Endothelial cell of umbilical vein (primary cell): ENCODE measurements at regions of chr1 and their contacts with region 1.

Region 1: DNA sequence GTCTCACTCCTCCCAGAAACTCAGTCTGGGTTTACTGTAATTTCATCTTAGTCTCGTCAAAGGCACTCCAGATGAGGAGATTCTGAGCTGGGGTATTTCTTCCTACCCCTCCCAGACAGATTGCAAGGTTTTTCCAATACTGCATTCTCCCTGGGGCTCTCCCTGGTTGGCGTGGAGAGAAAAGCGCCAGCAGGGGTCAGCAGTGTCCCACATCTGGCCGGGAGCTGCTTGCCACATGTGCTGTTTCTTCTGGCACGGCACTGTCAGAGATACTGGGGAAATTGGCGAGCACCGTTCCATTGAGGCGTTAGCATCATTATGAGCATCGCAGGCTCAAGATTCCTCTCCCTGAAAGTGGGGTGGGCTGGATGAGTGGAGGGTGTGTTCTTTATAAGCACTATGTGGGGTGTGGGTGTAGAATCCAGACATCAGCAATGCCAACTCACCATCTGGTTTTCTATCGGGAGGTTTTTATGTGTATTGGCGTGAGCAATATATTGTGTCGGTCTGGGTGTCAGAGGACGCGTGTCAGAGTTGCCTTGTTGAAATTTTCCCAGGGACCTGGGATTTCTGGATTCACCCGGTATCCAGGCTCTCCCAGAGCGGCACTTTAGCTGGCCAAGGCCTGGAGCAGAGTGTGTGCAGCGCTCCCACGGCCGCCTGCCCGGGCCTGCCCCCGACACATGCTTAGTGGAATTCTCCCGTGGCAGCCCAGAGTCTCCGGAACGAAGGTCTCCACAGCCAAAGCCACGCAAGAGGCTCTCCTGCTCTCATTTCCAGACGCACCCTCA is 8.0 kb upstream of the NAV1 start:
- DNase-seq: peak; percentile 77
- H3K4me3 ChIP-seq: no peak overlapping the region
- H3K27ac ChIP-seq: no peak overlapping the region
- H3K4me1 ChIP-seq: peaks cover 12% of the 10 kb centered on the region
- H3K27me3 ChIP-seq: no peaks in the 10 kb centered on the region
- CTCF ChIP-seq: peak; percentile 87 to 89
- POLR2A ChIP-seq: no peak

Region 2: GRCh38 chr1:201023517-201023902 is 507.4 kb before region 1 on chr1 and contains the start of gene KIF21B:
- CTCF ChIA-PET with region 1: no interaction called
- POLR2A ChIA-PET with region 1: no interaction called
- dilution Hi-C with region 1: no loop called
- intact Hi-C with region 1: no loop called
- DNase-seq: peak; percentile 75
- H3K4me3 ChIP-seq: peak within 1 kb of the TSS; percentile 11 to 49 (median 13)
- H3K27ac ChIP-seq: no peak within 1 kb of the TSS
- H3K4me1 ChIP-seq: peaks cover 37% of the 10 kb centered on the region
- H3K27me3 ChIP-seq: no peaks in the 10 kb centered on the region
- CTCF ChIP-seq: no peak
- POLR2A ChIP-seq: no peak
- total RNA-seq, gene KIF21B: 4.4 and 4.7 TPM in 2 replicates

Region 3: GRCh38 chr1:201481761-201482493 is 49.0 kb before region 1 on chr1:
- CTCF ChIA-PET with region 1: interaction called, 11 read pairs
- POLR2A ChIA-PET with region 1: no interaction called
- dilution Hi-C with region 1: no loop called
- intact Hi-C with region 1: no loop called
- DNase-seq: peak; percentile 80
- H3K4me3 ChIP-seq: no peak overlapping the region
- H3K27ac ChIP-seq: no peak overlapping the region
- H3K4me1 ChIP-seq: peaks cover 25% of the 10 kb centered on the region
- H3K27me3 ChIP-seq: peaks cover 0 to 3% of the 10 kb centered on the region in 2 experiments
- CTCF ChIP-seq: peak; percentile 91 to 92
- POLR2A ChIP-seq: no peak

Region 4: GRCh38 chr1:201649761-201650622 is 119.1 kb after region 1 on chr1:
- CTCF ChIA-PET with region 1: interaction called, 15 read pairs
- POLR2A ChIA-PET with region 1: interaction called, 4 read pairs
- dilution Hi-C with region 1: no loop called
- intact Hi-C with region 1: no loop called
- DNase-seq: peak; percentile 65
- H3K4me3 ChIP-seq: peak overlapping the region; percentile 30 to 57 (median 49)
- H3K27ac ChIP-seq: peak overlapping the region; percentile 50
- H3K4me1 ChIP-seq: peaks cover 30% of the 10 kb centered on the region
- H3K27me3 ChIP-seq: no peaks in the 10 kb centered on the region
- CTCF ChIP-seq: no peak
- POLR2A ChIP-seq: no peak

Region 5: DNA sequence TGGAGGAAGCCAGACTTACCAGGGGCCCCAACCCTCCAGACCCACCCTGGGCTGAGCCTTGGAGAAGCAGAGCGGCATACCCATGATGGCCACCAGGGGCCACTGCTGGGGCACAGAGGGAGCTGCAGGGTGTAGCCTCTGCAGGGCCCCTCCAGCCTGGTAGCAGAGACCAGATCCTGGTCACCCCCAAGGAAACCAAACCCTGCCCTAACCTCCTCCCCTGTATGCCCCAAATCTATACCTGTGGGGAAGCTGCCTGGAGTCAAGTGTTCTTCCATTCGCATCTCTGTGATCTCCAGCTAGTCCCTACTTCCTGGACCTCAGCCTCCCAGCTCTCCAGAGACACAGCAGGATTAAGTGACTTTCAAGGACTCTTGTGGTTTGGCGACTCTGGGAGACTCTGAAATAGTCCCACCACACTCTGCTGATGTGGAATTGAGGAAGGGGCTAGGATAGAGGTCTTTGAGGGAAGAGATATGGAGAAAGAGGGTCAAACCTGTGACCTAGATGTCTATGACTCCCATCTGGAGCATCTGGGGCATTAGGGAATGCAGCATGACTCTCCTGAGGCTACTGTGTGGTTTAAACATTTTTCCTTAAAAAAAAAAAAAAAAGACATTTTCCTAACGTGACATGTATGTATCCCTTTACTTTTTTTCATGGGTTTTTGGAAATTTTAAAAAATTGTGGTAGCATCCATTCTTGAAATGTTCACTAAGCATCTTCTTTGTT is 178.8 kb after region 1 on chr1:
- CTCF ChIA-PET with region 1: interaction called, 70 read pairs
- POLR2A ChIA-PET with region 1: interaction called, 3 read pairs
- dilution Hi-C with region 1: no loop called
- intact Hi-C with region 1: loop called (anchors 1 kb)
- DNase-seq: peak; percentile 67
- H3K4me3 ChIP-seq: no peak overlapping the region
- H3K27ac ChIP-seq: peak overlapping the region; percentile 0
- H3K4me1 ChIP-seq: peaks cover 36% of the 10 kb centered on the region
- H3K27me3 ChIP-seq: no peaks in the 10 kb centered on the region
- CTCF ChIP-seq: peak; percentile 80 to 97
- POLR2A ChIP-seq: no peak